ENCODE measurements at regions of chr10 and their contacts with region 1.

Region 1: DNA sequence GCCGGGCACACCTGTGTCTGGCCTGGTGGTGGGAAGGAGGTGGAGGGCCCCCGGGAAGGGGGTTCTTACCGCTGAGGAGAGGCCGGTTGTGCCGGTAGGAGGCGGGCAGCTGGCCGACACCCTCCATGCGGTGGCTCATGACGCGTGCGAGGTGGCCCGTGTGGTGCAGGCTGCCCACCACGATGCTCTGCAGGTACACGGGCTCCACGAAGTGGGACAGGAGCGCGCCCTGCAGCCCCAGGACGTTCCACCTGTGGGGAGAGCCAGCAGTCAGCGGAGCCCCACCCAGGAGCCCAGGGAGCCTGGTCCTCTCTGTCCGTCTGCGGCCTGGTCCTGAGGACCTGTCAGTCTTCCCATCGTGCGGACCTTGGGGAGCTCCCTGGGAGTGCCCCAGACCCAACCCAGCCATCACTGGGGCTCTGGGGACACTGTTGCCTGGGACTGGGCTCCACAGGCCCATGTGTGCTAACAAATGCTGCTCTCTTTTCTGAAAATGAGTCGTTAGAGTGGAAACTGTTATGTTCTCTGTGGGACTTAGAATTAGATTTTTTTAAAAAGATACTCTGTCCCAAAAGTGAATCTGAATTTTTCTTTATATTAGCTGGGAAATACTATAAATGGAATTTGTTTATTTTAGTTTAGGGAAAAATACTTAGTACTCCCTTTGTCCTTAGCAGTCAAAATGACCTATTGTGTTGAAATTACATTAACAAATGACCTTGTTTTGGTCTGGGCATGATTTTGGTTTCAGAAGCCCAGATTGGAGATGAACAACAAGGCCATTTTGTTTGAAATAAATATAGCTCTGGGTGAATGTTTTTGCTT is 143.9 kb downstream of the WDR37 start:
- DNase-seq: peak; percentile 50

Region 2: GRCh38 chr10:1162481-1163203 is 37.5 kb before region 1 on chr10:
- intact Hi-C with region 1: loop called in 1 of 2 experiments (anchors 1 kb)
- DNase-seq: peak; percentile 74

Region 3: DNA sequence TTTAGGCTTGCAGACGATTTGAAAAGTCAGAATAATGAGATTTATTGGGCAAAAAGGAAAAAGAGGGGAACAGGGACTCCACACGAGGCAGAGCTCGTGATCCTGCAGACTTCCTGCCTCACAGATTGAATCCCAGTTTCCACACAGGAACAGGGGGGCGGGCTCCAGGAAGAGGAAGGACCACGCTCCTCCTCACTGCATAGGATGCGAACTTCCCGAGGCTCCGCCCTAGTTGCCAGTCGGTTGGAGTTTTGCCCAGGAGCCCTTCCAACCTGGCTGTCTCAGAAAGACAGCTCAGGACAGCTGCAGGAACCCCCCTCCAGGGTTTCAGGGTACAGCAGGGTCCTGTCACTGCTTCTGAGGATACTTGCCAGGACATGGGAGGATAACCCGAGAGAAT is 1025.5 kb after region 1 on chr10:
- intact Hi-C with region 1: loop called in 1 of 2 experiments (anchors 5 kb)
- DNase-seq: no peak